Calu3 (cell line): ENCODE measurements at regions of chr15 and their contacts with region 1.

Region 1: GRCh38 chr15:97248376-97248775 is 712.1 kb upstream of the ARRDC4 start:
- DNase-seq: no peak
- H3K4me3 Mint-ChIP-seq: no peak overlapping the region
- H3K27ac Mint-ChIP-seq: no peak overlapping the region
- H3K4me1 Mint-ChIP-seq: peaks cover 11% of the 10 kb centered on the region
- H3K27me3 Mint-ChIP-seq: no peaks in the 10 kb centered on the region
- CTCF ChIP-seq: no peak

Region 2: GRCh38 chr15:97189162-97189780 is 59.1 kb before region 1 on chr15:
- CTCF ChIA-PET with region 1: no interaction called
- intact Hi-C with region 1: no loop called
- DNase-seq: no peak
- H3K4me3 Mint-ChIP-seq: no peak overlapping the region
- H3K27ac Mint-ChIP-seq: no peak overlapping the region
- H3K4me1 Mint-ChIP-seq: no peaks in the 10 kb centered on the region
- H3K27me3 Mint-ChIP-seq: no peaks in the 10 kb centered on the region
- CTCF ChIP-seq: no peak

Region 3: DNA sequence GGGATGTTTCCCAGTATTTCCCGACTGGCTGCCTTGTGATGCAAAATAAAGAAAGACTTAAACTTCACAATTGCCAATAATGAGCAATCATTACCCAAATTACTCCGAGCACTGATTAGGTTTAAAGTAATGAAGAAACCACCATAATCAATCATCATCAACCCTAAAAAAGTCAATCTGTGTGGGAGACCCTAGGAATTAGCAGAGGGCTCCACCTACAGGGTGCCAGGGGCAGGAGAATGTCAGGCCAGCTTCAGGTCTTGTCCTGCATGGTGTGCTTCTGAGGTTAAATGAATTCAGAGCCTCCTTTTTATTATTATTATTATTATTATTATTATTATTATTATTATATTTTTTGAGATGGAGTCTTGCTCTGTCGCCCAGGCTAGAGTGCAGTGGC is 234.1 kb after region 1 on chr15:
- CTCF ChIA-PET with region 1: no interaction called
- intact Hi-C with region 1: loop called (anchors 2 kb)
- DNase-seq: peak; percentile 41
- H3K4me3 Mint-ChIP-seq: no peak overlapping the region
- H3K27ac Mint-ChIP-seq: no peak overlapping the region
- H3K4me1 Mint-ChIP-seq: no peaks in the 10 kb centered on the region
- H3K27me3 Mint-ChIP-seq: no peaks in the 10 kb centered on the region
- CTCF ChIP-seq: no peak

Region 4: DNA sequence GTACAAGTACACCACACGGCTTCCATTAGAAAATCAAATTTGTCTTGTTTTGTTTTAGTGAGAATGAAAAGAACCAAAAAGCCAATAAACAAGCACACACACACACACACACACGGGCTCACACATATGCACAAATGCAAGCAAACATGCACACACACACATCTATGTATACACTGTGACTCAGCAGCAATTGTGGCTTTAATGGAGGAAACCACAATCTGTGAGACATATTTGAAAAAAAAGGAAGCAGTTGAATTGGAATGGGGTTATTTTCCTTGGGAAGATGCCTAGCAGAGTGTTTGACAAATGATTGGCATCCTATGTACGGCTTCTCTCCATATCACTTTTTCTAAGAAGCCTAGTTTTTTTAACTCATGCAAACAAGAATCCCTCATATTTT is 511.0 kb after region 1 on chr15:
- CTCF ChIA-PET with region 1: interaction called, 9 read pairs
- intact Hi-C with region 1: loop called (anchors 2 kb)
- DNase-seq: no peak
- H3K4me3 Mint-ChIP-seq: no peak overlapping the region
- H3K27ac Mint-ChIP-seq: no peak overlapping the region
- H3K4me1 Mint-ChIP-seq: peaks cover 8% of the 10 kb centered on the region
- H3K27me3 Mint-ChIP-seq: no peaks in the 10 kb centered on the region
- CTCF ChIP-seq: no peak